ENCODE measurements at regions of chr18 and their contacts with region 1.

Region 1: GRCh38 chr18:35143622-35144596 is 96.9 kb upstream of the ZNF397 start:
- DNase-seq: peak; percentile 38
- H3K4me3 Mint-ChIP-seq: no peak overlapping the region
- H3K27ac Mint-ChIP-seq: no peak overlapping the region
- H3K4me1 Mint-ChIP-seq: no peaks in the 10 kb centered on the region
- H3K27me3 Mint-ChIP-seq: no peaks in the 10 kb centered on the region

Region 2: DNA sequence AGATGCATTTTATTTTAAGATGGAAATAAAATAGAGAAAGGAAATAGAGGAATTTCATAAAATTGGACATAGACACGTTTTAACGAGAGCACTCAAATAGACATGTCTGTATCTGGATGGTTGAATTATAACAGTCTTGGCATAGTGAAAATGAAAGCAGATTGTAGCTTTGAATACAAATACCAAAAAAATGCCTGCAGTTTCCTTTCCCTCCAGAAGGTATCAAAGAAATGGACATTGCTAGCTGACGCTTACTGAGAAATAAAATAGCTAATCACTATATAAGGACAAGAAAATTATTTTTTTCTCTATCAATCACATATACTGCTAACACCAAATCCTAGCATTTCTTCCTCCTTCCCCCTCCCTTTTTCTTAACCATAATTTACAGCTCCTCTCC is 114.1 kb before region 1 on chr18:
- CTCF ChIA-PET with region 1: interaction called, 17 read pairs
- POLR2A ChIA-PET with region 1: no interaction called
- intact Hi-C with region 1: loop called (anchors 1 kb)
- DNase-seq: no peak
- H3K4me3 Mint-ChIP-seq: peak overlapping the region; percentile 73
- H3K27ac Mint-ChIP-seq: peak overlapping the region; percentile 95
- H3K4me1 Mint-ChIP-seq: peaks cover 42% of the 10 kb centered on the region
- H3K27me3 Mint-ChIP-seq: no peaks in the 10 kb centered on the region

Measured in activated CD4-positive, alpha-beta memory T cell treated with anti-CD3 and anti-CD28 coated beads for 36 hours (primary cell).